Heart right ventricle (tissue), 16 donors: ENCODE measurements at regions of chr22 and their contacts with region 1.

Region 1: GRCh38 chr22:37330200-37331033 is 48.1 kb downstream of the CYTH4 start:
- DNase-seq: no peak
- ATAC-seq: no peak
- H3K4me3 ChIP-seq: no peak overlapping the region
- H3K27ac ChIP-seq: no peak overlapping the region
- H3K4me1 ChIP-seq: peaks cover 0 to 9% (median 0%) of the 10 kb centered on the region in 9 donors
- H3K27me3 ChIP-seq: peaks cover 18 to 97% (median 94%) of the 10 kb centered on the region in 7 donors
- CTCF ChIP-seq: no peak

Region 2: DNA sequence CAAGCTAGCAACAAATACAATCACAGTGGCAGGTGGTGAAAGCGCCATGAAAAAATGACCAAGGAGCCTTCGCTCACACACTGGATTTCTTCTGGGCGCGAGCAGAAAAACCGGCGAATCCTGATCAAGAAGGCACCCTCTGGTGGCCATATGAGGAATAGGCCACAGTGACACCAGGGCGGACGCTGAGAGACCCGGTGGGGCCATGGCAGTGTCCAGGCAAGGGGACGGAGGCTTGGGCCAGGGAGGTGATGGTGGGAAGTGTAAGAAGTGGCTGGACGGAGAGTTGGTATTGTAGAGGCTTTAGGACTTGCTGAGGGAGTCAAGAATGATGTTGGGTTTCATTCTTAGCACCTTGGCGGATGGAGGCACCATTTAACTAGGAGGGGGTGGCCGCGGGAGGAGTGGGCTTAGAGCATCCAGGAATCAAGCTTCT is 69.5 kb before region 1 on chr22:
- intact Hi-C with region 1: no loop called
- DNase-seq: peak; percentile 36 to 50
- ATAC-seq: peak in 7 of 8 donors; percentile 55 to 74 (median 66)
- H3K4me3 ChIP-seq: no peak overlapping the region
- H3K27ac ChIP-seq: no peak overlapping the region
- H3K4me1 ChIP-seq: peaks cover 0 to 21% (median 0%) of the 10 kb centered on the region in 9 donors
- H3K27me3 ChIP-seq: peaks cover 0 to 75% (median 63%) of the 10 kb centered on the region in 7 donors
- CTCF ChIP-seq: peak; percentile 81 to 93 (median 85)

Region 3: GRCh38 chr22:37428649-37429586 is 98.5 kb after region 1 on chr22:
- intact Hi-C with region 1: loop called in 1 of 10 experiments (anchors 10 kb)
- DNase-seq: peak in 1 of 2 donors; percentile 45
- ATAC-seq: peak in 2 of 8 donors; percentile 10 to 40
- H3K4me3 ChIP-seq: no peak overlapping the region
- H3K27ac ChIP-seq: no peak overlapping the region
- H3K4me1 ChIP-seq: peaks cover 0 to 12% (median 5%) of the 10 kb centered on the region in 9 donors
- H3K27me3 ChIP-seq: peaks cover 34 to 100% (median 98%) of the 10 kb centered on the region in 7 donors
- CTCF ChIP-seq: peak; percentile 27 to 71 (median 59)

Region 4: GRCh38 chr22:37448511-37449127 is 118.2 kb after region 1 on chr22:
- intact Hi-C with region 1: loop called in 1 of 10 experiments (anchors 5 kb)
- DNase-seq: no peak
- ATAC-seq: no peak
- H3K4me3 ChIP-seq: no peak overlapping the region
- H3K27ac ChIP-seq: no peak overlapping the region
- H3K4me1 ChIP-seq: no peaks in the 10 kb centered on the region
- H3K27me3 ChIP-seq: peaks cover 0 to 64% (median 48%) of the 10 kb centered on the region in 7 donors
- CTCF ChIP-seq: no peak